Naive thymus-derived CD8-positive, alpha-beta T cell (primary cell): ENCODE measurements at regions of chr15 and their contacts with region 1.

Region 1: DNA sequence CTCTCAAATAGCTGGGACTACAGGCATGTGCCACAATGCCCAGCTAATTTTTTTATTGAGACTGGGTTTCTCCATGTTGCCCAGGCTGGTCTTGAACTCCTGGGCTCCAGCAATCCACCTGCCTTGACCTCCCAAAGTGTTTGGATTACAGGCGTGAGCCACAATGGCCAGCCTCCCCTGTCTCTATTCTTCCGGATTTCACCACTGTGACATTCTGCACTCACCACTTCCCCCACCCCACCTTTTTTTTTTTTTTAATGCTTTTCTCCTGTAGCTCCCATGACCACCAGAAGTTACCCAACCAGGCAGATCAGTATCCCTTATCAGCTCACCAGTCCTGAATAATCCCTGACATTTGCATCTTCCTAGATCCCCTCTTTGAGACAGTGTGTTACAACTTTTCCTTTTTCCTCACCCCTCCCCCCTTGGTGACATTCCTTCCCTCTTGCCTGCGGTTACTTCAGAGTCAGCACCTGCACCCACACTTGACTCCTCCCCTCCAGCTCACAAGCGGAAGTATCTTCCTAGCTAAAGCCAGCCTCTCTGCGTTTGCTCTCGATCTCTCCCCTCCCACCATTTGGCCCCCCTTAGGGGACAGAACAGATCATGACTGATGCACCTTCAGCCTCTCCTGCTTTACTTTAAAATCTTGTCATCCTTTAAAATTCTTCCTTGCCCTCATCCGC is 13.5 kb upstream of the ZNF592 start:
- DNase-seq: peak; percentile 29 to 86 (median 68)
- ATAC-seq: peak; percentile 88 to 89
- H3K4me3 Mint-ChIP-seq: peak overlapping the region; percentile 75 to 91 (median 84)
- H3K27ac Mint-ChIP-seq: peak overlapping the region; percentile 84 to 97 (median 93)
- H3K4me1 Mint-ChIP-seq: peaks cover 24 to 52% (median 45%) of the 10 kb centered on the region in 4 donors
- H3K27me3 Mint-ChIP-seq: no peaks in the 10 kb centered on the region

Region 2: GRCh38 chr15:84645496-84645895 is 89.4 kb before region 1 on chr15:
- POLR2A ChIA-PET with region 1: no interaction called
- DNase-seq: no peak
- ATAC-seq: no peak
- H3K4me3 Mint-ChIP-seq: no peak overlapping the region
- H3K27ac Mint-ChIP-seq: peak overlapping the region in 5 of 10 donors; percentile 7 to 73 (median 44)
- H3K4me1 Mint-ChIP-seq: peaks cover 9 to 22% (median 16%) of the 10 kb centered on the region in 4 donors
- H3K27me3 Mint-ChIP-seq: no peaks in the 10 kb centered on the region

Region 3: DNA sequence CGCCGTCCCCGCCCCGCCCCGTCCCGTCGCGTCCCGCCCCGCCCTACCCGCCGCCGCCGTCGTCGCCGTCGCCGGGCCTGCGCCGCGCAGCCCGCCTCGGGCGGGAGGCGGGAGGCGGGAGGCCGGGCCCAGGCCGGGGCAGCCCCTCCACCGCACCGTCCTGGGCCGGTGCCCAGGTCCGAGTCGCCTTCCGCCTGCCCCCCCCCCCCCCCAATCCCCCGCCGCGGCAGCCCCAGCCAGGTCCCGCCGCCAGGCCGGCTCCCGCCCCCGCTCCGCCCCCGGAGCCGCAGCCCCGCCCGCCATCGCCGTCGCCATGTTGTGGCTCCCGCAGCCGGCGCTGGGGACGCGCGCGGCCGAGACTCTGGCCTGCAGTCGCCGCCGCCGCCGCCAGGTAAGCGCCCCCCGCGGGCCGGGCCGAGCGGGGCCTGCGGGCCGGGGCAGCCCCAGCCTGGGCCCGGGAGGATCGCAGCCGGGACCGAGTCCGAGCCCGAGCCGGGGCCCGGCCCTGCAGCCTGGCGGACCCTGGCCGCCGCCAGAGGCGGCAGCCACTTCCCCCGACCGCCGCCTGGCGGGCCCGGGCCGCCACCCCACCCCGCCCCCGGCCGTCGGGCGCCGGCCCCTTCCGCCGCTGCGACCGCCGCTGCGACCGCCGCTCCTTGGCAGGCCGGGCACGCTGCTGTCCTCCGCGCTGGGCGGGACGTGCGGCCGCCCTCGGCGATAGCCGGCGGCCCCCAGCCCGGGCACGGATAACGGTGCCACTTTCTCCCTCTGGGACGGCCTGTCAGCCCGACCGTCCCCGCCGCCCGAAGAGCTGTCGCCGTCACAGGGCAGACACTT is 13.6 kb after region 1 on chr15 and contains the start of gene ZNF592:
- POLR2A ChIA-PET with region 1: interaction called, 159 read pairs
- DNase-seq: peak; percentile 68 to 87 (median 82)
- ATAC-seq: peak; percentile 67 to 68
- H3K4me3 Mint-ChIP-seq: peak within 1 kb of the TSS; percentile 93 to 100 (median 98)
- H3K27ac Mint-ChIP-seq: peak within 1 kb of the TSS; percentile 98 to 100 (median 99)
- H3K4me1 Mint-ChIP-seq: peaks cover 49 to 74% (median 71%) of the 10 kb centered on the region in 4 donors
- H3K27me3 Mint-ChIP-seq: no peaks in the 10 kb centered on the region
- polyA plus RNA-seq, gene ZNF592: 3.2 to 9.4 (median 4.1) TPM

Region 4: DNA sequence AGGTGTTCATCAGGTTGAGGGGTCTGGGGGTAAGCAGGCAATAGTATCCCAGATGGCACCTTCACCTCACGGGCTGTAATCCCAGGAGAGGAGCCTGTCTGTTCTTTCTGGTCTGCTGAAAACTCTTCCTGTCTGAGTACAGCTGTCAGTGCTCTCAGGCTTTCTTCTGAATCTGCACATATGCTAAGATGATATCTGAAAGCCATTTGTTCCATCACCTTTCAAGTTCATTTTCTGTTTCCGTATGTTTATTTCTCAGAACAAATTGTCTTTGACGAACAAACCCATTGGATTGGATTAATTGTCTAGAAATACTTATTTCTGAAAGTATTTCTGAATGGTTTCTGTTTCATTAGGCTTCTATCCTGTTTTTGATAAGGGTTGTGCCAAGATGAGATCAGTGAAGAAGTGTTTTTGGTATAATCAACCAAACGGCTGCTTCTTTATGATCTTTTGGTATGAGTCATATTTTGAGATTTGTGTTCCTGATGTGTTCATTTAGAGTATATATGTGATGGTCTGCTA is 26.7 kb after region 1 on chr15:
- POLR2A ChIA-PET with region 1: no interaction called
- DNase-seq: peak in 1 of 10 donors; percentile 19
- ATAC-seq: peak; percentile 65 to 72
- H3K4me3 Mint-ChIP-seq: no peak overlapping the region
- H3K27ac Mint-ChIP-seq: no peak overlapping the region
- H3K4me1 Mint-ChIP-seq: peaks cover 6 to 32% (median 22%) of the 10 kb centered on the region in 4 donors
- H3K27me3 Mint-ChIP-seq: no peaks in the 10 kb centered on the region